ENCODE measurements at regions of chr2 and their contacts with region 1.

Region 1: GRCh38 chr2:47782671-47783485 is at the start of gene MSH6:
- DNase-seq: peak; percentile 73 to 81
- ATAC-seq: peak; percentile 92 to 93
- H3K4me3 ChIP-seq: peak within 1 kb of the TSS; percentile 93 to 100 (median 98)
- H3K27ac ChIP-seq: peak within 1 kb of the TSS; percentile 82 to 97 (median 88)
- H3K4me1 ChIP-seq: peaks cover 8 to 15% of the 10 kb centered on the region in 2 donors
- H3K27me3 ChIP-seq: no peaks in the 10 kb centered on the region
- CTCF ChIP-seq: peak in 1 of 5 experiments; percentile 18
- POLR2A ChIP-seq: peak; percentile 72 to 83
- total RNA-seq, gene MSH6: 9.4 to 26.6 (median 16.3) TPM

Region 2: GRCh38 chr2:47897883-47898731 is 115.2 kb after region 1 on chr2:
- in situ Hi-C with region 1: loop called in 1 of 4 experiments (anchors 10 kb)
- intact Hi-C with region 1: loop called (anchors 2 kb)
- DNase-seq: no peak
- ATAC-seq: no peak
- H3K4me3 ChIP-seq: no peak overlapping the region
- H3K27ac ChIP-seq: no peak overlapping the region
- H3K4me1 ChIP-seq: peaks cover 34 to 46% of the 10 kb centered on the region in 2 donors
- H3K27me3 ChIP-seq: no peaks in the 10 kb centered on the region
- CTCF ChIP-seq: no peak
- POLR2A ChIP-seq: no peak

Region 3: GRCh38 chr2:48433682-48434081 is 650.8 kb after region 1 on chr2:
- in situ Hi-C with region 1: loop called in 1 of 4 experiments (anchors 10 kb)
- intact Hi-C with region 1: no loop called
- DNase-seq: peak in 1 of 2 donors; percentile 26
- ATAC-seq: peak in 1 of 2 donors; percentile 44
- H3K4me3 ChIP-seq: no peak overlapping the region
- H3K27ac ChIP-seq: no peak overlapping the region
- H3K4me1 ChIP-seq: no peaks in the 10 kb centered on the region
- H3K27me3 ChIP-seq: no peaks in the 10 kb centered on the region
- CTCF ChIP-seq: no peak
- POLR2A ChIP-seq: no peak